Psoas muscle (tissue), 8 donors: ENCODE measurements at regions of chr13 and their contacts with region 1.

Region 1: DNA sequence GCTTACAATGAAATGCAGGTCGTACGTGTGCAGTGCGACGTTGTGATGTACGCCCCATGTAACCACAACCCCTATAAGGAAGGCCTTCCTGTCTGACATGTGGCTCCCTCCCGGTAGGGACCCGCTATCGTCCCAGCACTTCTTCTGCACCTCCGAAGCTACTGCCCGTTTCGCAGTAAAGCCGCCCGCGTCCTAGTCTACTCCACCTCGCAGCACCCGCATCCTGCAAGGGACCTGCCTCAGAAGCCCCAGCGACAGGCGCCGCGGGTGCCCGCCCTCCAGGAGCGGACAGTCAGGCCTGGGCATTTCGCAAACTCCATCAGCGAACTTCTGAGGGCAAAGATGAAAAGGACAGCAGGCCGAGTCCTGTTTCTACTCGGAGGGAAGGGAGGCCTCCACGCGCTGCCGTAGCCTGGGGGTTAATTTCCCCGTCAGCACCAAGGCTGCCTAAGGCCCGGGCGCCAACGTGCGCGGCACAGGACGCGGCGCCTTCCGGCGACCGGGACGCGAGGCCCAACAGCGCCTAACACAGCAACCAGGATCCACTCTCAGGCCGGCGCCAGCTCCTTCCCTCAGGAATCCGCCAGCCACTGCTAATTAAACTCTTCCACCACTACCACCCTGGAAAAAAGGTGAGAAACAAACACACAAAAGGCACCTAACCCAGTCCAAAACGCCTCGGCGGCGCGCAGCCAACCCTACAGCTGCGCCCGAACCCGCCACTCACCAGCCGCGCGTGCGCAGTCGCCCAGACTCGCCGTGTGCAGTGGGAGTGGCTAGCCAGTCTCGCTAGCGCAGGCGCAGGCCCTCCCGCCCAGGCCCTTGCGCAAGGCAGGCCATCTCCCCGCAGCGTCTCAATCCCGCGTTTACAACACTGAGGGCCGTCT is at the start of gene EEF1AKMT1:
- DNase-seq: peak; percentile 96 to 98
- ATAC-seq: peak; percentile 97 to 99 (median 98)
- H3K4me3 ChIP-seq: peak within 1 kb of the TSS; percentile 83
- H3K27ac ChIP-seq: peak within 1 kb of the TSS; percentile 94
- H3K4me1 ChIP-seq: no peaks in the 10 kb centered on the region
- H3K27me3 ChIP-seq: no peaks in the 10 kb centered on the region
- CTCF ChIP-seq: no peak
- total RNA-seq, gene EEF1AKMT1: 8.2 to 8.9 (median 8.2) TPM

Region 2: DNA sequence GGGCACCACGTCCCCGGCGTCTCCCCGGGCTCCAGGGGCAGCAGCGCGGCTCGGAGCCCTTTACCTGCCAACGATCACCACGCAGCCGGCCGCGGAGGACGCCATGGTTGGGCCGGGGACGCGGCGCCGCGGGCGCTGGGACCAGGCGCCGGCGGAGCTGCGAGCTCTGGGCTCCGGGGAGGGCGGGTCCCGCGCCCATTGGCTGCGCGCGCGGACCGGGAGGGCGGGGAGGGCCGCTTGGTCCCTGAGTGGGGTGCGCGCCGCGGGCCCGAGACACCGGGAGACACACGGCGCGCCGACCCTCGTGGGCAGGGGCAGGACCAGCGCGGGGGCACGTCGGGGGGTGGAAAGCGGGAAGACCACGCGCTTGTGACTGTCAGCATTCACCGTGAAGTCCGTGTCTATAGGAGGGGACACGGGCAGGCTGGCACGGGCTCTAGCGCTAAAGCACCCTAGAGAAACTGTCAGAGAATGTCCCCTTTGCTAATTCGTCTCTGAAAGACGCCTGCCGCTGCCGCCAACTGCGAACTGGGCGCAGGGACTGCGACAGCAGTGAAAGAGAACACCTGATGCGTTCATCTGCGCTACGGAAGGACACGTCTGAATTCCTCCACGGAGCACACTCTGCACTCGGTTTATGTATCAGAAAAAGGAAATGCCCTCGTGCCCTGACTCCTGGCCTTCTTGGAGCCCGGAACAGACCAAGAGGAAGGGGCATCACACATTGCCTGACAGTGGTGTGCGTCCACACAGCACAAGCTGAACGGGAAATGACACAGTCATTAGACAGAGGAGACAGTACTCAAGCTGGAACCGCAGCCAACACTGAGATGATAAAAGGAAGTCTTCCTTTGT is 247.5 kb before region 1 on chr13 and contains the start of gene CRYL1:
- intact Hi-C with region 1: loop called in 1 of 2 experiments (anchors 10 kb)
- DNase-seq: peak; percentile 83 to 88
- ATAC-seq: peak; percentile 95 to 97 (median 96)
- H3K4me3 ChIP-seq: peak within 1 kb of the TSS; percentile 83
- H3K27ac ChIP-seq: peak within 1 kb of the TSS; percentile 91
- H3K4me1 ChIP-seq: no peaks in the 10 kb centered on the region
- H3K27me3 ChIP-seq: no peaks in the 10 kb centered on the region
- CTCF ChIP-seq: no peak
- total RNA-seq, gene CRYL1: 12.4 to 17.0 (median 14.2) TPM

Region 3: DNA sequence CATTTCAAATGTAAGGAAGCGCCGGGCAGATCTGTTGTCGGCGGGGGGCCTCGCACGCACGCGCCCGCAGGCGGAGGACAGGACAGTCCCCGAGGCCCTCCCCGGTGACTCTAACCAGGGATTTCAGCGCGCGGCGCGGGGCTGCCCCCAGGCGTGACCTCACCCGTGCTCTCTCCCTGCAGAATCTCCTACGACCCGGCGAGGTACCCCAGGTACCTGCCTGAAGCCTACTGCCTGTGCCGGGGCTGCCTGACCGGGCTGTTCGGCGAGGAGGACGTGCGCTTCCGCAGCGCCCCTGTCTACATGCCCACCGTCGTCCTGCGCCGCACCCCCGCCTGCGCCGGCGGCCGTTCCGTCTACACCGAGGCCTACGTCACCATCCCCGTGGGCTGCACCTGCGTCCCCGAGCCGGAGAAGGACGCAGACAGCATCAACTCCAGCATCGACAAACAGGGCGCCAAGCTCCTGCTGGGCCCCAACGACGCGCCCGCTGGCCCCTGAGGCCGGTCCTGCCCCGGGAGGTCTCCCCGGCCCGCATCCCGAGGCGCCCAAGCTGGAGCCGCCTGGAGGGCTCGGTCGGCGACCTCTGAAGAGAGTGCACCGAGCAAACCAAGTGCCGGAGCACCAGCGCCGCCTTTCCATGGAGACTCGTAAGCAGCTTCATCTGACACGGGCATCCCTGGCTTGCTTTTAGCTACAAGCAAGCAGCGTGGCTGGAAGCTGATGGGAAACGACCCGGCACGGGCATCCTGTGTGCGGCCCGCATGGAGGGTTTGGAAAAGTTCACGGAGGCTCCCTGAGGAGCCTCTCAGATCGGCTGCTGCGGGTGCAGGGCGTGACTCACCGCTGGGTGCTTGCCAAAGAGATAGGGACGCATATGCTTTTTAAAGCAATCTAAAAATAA is 51.7 kb before region 1 on chr13:
- intact Hi-C with region 1: loop called in 1 of 2 experiments (anchors 5 kb)
- DNase-seq: peak; percentile 60 to 82
- ATAC-seq: peak in 3 of 4 donors; percentile 12 to 39 (median 34)
- H3K4me3 ChIP-seq: peak overlapping the region; percentile 67
- H3K27ac ChIP-seq: peak overlapping the region; percentile 79
- H3K4me1 ChIP-seq: peaks cover 8% of the 10 kb centered on the region
- H3K27me3 ChIP-seq: peaks cover 0 to 8% (median 0%) of the 10 kb centered on the region in 3 donors
- CTCF ChIP-seq: no peak

Region 4: GRCh38 chr13:20729633-20730585 is 43.5 kb before region 1 on chr13:
- intact Hi-C with region 1: loop called in 1 of 2 experiments (anchors 5 kb)
- DNase-seq: no peak
- ATAC-seq: no peak
- H3K4me3 ChIP-seq: no peak overlapping the region
- H3K27ac ChIP-seq: no peak overlapping the region
- H3K4me1 ChIP-seq: peaks cover 4% of the 10 kb centered on the region
- H3K27me3 ChIP-seq: no peaks in the 10 kb centered on the region
- CTCF ChIP-seq: no peak

Region 5: GRCh38 chr13:20814224-20814910 is 40.9 kb after region 1 on chr13:
- intact Hi-C with region 1: loop called in 1 of 2 experiments (anchors 5 kb)
- DNase-seq: peak; percentile 90 to 95
- ATAC-seq: peak; percentile 93 to 96 (median 96)
- H3K4me3 ChIP-seq: peak overlapping the region; percentile 55
- H3K27ac ChIP-seq: peak overlapping the region; percentile 89
- H3K4me1 ChIP-seq: peaks cover 41% of the 10 kb centered on the region
- H3K27me3 ChIP-seq: no peaks in the 10 kb centered on the region
- CTCF ChIP-seq: no peak